BJ (cell line): ENCODE measurements at regions of chr4 and their contacts with region 1.

Region 1: DNA sequence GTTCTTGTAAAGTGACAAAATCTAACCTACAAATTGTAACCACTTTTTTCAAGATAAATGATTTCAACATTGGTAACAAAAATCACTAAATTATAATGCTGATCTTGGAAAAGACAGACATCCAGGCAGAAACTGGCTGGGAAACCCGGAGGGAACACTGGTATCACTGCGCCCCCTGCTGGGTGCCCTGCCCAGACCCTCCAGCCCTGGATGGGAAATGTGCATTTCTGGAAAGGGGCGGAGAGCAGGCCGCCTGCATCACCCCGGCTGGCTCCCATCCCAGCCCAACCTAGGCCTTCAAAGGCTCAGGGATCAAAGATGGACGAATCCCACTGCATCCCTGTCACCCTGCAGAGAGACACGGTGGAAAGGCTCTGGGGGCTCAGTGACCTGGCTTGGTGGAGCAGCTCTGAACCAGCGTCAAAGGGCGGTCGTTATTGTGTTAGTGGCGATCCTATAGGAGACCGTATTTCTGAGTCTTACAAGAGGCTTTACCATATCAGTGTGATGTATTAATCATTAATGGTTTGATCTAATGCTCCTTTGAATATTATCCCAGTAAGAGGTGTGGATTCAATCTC is 37.3 kb downstream of the ACOX3 start:
- DNase-seq: no peak
- H3K4me3 ChIP-seq: no peak overlapping the region
- H3K27me3 ChIP-seq: no peaks in the 10 kb centered on the region
- CTCF ChIP-seq: peak; percentile 92

Region 2: DNA sequence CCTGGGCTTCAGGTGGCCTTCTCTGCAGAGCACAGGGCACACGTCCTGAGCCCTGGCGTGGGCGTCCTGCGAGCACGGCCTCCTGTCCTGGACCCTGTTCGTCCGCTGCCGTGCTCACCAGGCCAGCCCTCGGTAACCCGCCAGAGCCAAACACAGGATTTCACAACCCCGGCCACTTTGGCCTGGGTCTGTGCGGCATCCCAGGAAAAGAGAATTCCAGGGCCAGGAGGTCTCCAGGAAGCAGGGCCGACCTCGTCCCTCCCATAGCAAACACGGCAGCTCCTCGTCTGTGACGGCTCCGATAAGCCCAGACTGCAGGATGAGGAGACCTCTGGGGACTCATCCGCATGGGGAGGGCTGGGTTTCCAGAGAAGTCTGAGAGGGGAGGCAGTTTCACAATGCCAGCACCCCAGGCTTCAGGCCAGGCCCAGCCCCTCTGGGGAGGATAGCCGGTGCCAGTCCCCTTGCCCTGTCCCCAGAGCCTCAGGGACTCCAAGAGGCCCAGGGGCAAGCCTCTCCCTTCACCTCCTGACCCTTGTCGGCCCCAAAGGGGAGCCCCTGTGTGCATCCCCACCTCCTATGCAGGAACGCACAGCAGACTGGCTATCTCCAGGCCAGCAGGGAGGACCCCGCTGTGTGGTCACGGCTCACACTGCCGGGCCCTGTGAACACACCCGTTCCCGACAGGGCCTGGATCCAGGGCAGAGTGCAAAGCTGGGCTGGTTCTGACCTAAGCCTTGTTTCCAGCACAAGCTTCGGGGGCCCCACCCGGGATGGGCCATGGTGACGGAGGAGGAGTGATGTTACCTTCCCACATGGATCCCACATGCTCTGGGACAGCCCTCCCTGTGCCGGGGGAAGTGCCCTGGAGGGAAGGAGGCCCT is 156.0 kb before region 1 on chr4:
- CTCF ChIA-PET with region 1: interaction called, 76 read pairs
- POLR2A ChIA-PET with region 1: no interaction called
- DNase-seq: no peak
- H3K4me3 ChIP-seq: no peak overlapping the region
- H3K27me3 ChIP-seq: peaks cover 3% of the 10 kb centered on the region; the same call in 1 of the 2 replicates
- CTCF ChIP-seq: no peak

Region 3: GRCh38 chr4:8267077-8267476 is 136.2 kb before region 1 on chr4:
- CTCF ChIA-PET with region 1: interaction called, 11 read pairs
- POLR2A ChIA-PET with region 1: no interaction called
- DNase-seq: no peak
- H3K4me3 ChIP-seq: no peak overlapping the region
- H3K27me3 ChIP-seq: peaks cover 6% of the 10 kb centered on the region; the same call in 1 of the 2 replicates
- CTCF ChIP-seq: peak; percentile 58

Region 4: DNA sequence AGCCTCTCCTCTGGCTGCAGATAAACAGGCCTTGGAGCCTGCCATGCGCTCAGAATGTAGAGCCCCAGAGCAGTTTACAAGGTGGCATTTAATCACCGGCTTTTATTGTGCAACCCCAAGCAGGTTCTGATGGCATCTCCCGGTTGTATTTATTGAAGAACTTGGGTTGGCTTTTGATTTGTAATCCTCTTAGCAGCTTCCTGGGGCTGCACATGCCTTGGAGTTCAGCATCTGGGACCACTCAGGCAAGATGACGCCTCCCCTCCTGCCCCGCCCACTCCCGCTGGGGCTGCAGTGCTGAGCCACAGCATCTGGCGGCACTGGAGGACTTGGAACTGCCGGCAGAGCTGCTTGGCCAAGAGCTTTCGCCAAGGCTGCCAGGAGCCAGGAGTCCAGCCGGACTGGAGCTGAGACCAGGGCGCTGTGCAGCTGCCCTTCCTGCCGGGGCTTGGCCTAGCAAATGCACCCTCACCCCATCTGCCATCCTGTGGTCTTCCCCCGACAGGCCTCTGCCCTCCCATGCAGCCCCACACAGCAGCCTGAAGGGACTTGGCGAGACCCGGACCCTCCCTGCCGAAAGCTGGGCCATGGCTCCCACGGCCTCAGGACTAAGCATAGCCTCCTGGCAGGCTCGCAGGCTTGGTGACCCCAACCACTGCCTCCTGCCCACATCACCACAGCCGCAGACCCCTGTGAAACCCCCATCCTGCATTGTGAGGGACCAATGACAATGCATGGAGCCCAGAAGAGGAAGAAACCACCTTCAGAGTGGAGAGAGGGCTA is 128.3 kb before region 1 on chr4:
- CTCF ChIA-PET with region 1: interaction called, 26 read pairs
- POLR2A ChIA-PET with region 1: no interaction called
- DNase-seq: peak; percentile 77
- H3K4me3 ChIP-seq: no peak overlapping the region
- H3K27me3 ChIP-seq: peaks cover 4% of the 10 kb centered on the region; the same call in 1 of the 2 replicates
- CTCF ChIP-seq: peak; percentile 76